Dendritic cell treated with granulocyte-macrophage colony-stimulating factor and Interleukin-4, amounts not matched to agents 40 ng/mL and 50 ng/mL, for 4 days (primary cell): ENCODE measurements at regions of chr19 and their contacts with region 1.

Region 1: GRCh38 chr19:43503501-43504425 is 783 bp downstream of the PHLDB3 start:
- H3K4me3 Mint-ChIP-seq: peak overlapping the region; percentile 100
- H3K27ac Mint-ChIP-seq: peak overlapping the region; percentile 93
- H3K4me1 Mint-ChIP-seq: peaks cover 44% of the 10 kb centered on the region
- H3K27me3 Mint-ChIP-seq: peaks cover 4% of the 10 kb centered on the region

Region 2: GRCh38 chr19:43446746-43447489 is 56.8 kb before region 1 on chr19:
- intact Hi-C with region 1: loop called (anchors 1 kb)
- H3K4me3 Mint-ChIP-seq: no peak overlapping the region
- H3K27ac Mint-ChIP-seq: no peak overlapping the region
- H3K4me1 Mint-ChIP-seq: peaks cover 79% of the 10 kb centered on the region
- H3K27me3 Mint-ChIP-seq: peaks cover 10% of the 10 kb centered on the region

Region 3: DNA sequence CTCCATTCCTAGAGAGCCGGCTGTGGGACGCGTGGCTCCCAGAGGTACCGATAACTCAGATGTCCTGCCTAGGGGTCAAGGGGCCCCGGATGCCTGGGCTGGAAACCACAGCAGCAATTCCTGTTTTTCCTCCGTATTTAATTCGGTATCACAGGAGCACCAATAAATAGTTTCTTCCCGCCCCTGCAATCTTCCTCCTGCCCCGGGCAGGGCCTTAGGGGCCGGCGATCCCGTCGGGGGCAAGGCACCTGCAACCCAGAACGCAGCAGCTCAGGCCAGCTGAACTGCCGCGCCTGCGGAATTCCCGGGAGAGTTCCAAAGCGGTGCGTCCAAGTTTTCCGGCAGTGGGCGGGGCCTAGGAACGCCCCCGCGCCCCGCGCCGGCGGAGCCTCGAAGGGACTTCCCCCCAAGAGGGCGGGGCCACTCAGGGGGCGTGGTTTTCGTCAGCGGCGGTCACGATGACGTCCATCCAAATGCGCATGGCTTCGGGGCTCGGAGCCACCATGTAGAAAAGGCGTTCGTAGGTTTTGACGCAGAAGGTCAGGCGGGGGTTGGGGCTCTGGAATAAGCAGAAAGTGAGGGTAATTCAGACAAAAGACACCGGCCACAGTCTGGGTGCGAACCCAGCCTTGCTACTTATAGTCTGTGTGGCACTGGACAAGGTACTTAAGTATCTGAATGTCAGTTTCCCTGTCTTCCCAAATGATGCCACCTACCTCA is 28.6 kb before region 1 on chr19:
- intact Hi-C with region 1: loop called (anchors 1 kb)
- H3K4me3 Mint-ChIP-seq: peak overlapping the region; percentile 81
- H3K27ac Mint-ChIP-seq: peak overlapping the region; percentile 92
- H3K4me1 Mint-ChIP-seq: peaks cover 24% of the 10 kb centered on the region
- H3K27me3 Mint-ChIP-seq: peaks cover 10% of the 10 kb centered on the region